ENCODE measurements at regions of chr2 and their contacts with region 1.

Region 1: GRCh38 chr2:38377050-38377828 is at the start of gene ATL2:
- DNase-seq: peak; percentile 96 to 99
- H3K4me3 ChIP-seq: peak within 1 kb of the TSS; percentile 78
- CTCF ChIP-seq: no peak
- POLR2A ChIP-seq: peak in 1 of 2 donors; percentile 45
- total RNA-seq, gene ATL2: 147 to 220 (median 187) TPM

Region 2: DNA sequence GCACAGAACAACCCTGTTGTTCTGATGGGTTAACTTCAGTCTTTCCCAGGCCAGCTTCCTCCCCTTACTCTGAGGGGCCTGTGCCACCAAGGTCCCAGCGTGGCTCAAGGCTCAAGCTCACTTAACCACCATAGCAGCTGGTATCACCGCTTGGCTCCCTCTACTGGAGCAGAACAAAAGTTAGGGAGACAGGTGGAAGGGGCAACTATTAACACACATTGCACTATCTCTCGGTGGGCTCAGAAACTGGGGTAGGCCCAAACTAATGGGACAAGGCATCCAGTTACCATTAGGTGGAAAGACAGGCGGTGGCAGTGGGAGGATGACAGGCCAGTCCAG is 88.5 kb after region 1 on chr2:
- intact Hi-C with region 1: loop called (anchors 10 kb)
- DNase-seq: no peak
- H3K4me3 ChIP-seq: no peak overlapping the region
- CTCF ChIP-seq: no peak
- POLR2A ChIP-seq: no peak